CD4-positive, alpha-beta memory T cell (primary cell): ENCODE measurements at regions of chr10 and their contacts with region 1.

Region 1: GRCh38 chr10:99711129-99711719 is 20.7 kb downstream of the COX15 start:
- DNase-seq: peak; percentile 24 to 34 (median 33)
- H3K4me3 ChIP-seq: no peak overlapping the region
- H3K4me3 Mint-ChIP-seq: no peak overlapping the region
- H3K27ac ChIP-seq: no peak overlapping the region
- H3K27ac Mint-ChIP-seq: peak overlapping the region in 2 of 7 donors; percentile 31 to 80
- H3K4me1 ChIP-seq: no peaks in the 10 kb centered on the region
- H3K4me1 Mint-ChIP-seq: peaks cover 0 to 2% (median 0%) of the 10 kb centered on the region in 4 donors
- H3K27me3 ChIP-seq: no peaks in the 10 kb centered on the region
- H3K27me3 Mint-ChIP-seq: no peaks in the 10 kb centered on the region

Region 2: DNA sequence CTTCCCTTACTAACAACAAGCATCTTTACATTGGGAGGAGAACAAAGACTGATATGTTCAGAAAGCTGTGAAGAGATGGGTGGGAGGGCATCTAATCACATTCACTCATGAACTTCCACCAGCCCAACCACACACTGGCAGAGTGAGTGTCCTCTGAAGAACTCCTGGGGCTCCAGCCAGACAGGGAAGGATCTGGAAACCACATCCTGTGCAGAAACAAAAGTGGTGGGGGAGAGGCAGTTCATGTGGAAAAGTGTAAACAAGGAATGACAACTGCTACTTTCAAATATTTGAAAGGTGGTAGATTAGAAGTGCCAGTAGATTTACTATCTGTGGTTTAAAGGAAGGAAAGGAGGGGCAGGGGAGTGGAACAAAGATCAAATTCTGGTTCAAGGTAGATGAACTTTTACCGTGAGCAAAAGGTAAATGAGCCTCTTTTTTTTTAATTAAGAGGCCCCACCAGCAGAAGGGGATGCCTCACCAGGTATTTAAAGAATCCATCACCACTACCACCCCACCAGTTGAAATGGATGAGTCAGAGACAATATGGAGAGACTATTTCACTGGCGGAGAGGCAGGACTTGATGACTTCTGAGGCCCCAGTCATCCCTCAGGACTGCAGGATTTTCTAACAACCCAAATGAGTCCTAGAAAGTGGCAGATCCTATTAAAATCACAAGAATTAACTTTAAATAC is 315.3 kb before region 1 on chr10:
- CTCF ChIA-PET with region 1: interaction called, 8 read pairs
- POLR2A ChIA-PET with region 1: no interaction called
- intact Hi-C with region 1: loop called (anchors 1 kb)
- DNase-seq: no peak
- H3K4me3 ChIP-seq: no peak overlapping the region
- H3K4me3 Mint-ChIP-seq: no peak overlapping the region
- H3K27ac ChIP-seq: no peak overlapping the region
- H3K27ac Mint-ChIP-seq: peak overlapping the region in 5 of 7 donors; percentile 25 to 79 (median 66)
- H3K4me1 ChIP-seq: no peaks in the 10 kb centered on the region
- H3K4me1 Mint-ChIP-seq: peaks cover 0 to 8% (median 5%) of the 10 kb centered on the region in 4 donors
- H3K27me3 ChIP-seq: no peaks in the 10 kb centered on the region
- H3K27me3 Mint-ChIP-seq: no peaks in the 10 kb centered on the region

Region 3: DNA sequence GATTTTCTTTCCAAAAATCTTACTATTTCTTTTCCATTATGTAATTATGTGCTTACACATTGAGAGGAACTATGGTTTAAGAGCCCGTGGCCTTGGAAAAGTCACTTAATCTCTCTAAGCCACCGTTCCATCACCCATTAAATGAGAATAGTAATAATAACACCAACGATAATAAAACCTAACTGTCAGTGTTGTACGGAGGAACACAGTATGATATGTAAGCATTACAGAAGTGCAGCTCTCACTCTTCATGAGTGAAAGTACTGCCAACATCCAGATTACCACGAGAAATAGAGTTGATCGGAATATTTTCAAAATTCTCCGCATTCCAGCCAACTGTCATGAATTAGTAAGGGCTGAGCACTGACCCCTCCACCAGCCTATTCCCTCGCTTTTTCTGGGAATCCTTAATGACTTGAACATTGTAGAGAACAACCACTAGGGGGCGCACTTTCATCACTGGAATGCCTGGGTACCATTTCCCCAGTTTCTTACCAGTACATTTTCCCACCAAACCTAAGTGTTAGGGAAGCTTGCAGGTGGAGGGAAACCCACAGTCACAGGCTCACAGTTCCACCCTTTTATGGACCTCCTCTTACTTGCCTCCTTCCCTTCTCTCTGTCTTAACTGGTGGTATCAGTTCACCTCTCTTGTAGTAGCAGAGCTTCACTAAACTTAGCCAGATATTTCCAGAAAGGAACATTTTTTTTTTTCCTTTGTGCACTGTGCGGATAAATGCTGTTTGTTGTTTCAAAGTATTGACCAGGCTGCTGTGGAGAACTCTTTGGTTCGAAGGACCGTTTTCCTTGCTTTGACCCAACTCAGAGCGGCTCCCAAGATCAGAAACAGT is 150.7 kb before region 1 on chr10:
- CTCF ChIA-PET with region 1: interaction called, 14 read pairs
- POLR2A ChIA-PET with region 1: no interaction called
- intact Hi-C with region 1: no loop called
- DNase-seq: peak in 4 of 5 donors; percentile 14 to 32 (median 32)
- H3K4me3 ChIP-seq: no peak overlapping the region
- H3K4me3 Mint-ChIP-seq: no peak overlapping the region
- H3K27ac ChIP-seq: no peak overlapping the region
- H3K27ac Mint-ChIP-seq: no peak overlapping the region
- H3K4me1 ChIP-seq: peaks cover 9% of the 10 kb centered on the region
- H3K4me1 Mint-ChIP-seq: peaks cover 6 to 11% (median 9%) of the 10 kb centered on the region in 4 donors
- H3K27me3 ChIP-seq: no peaks in the 10 kb centered on the region
- H3K27me3 Mint-ChIP-seq: peaks cover 11 to 12% of the 10 kb centered on the region in 2 donors